CD8-positive, alpha-beta T cell (primary cell): ENCODE measurements at regions of chr12 and their contacts with region 1.

Region 1: DNA sequence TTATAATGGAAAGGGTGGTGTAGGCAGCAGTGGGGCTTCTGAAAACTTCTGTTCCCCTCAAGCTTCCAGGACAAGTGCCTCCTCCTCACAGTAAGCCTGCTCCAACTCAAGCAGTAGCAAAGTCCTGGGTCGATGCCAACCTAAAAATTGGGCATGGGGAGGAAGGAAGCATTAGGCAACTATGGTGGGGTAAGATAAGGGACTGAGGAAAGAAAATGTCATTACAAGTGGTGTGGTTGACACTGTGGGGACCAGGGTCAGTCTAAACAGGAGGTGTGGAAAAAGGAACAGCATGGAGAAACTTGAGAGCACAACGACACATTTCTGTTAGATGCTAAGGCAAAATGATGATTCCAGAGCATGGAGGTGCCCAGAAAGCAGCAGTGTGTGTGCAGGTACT is 34.9 kb downstream of the WIF1 start:
- DNase-seq: no peak
- ATAC-seq: no peak
- H3K4me3 ChIP-seq: no peak overlapping the region
- H3K4me3 Mint-ChIP-seq: no peak overlapping the region
- H3K27ac ChIP-seq: no peak overlapping the region
- H3K27ac Mint-ChIP-seq: no peak overlapping the region
- H3K4me1 ChIP-seq: no peaks in the 10 kb centered on the region
- H3K4me1 Mint-ChIP-seq: no peaks in the 10 kb centered on the region
- H3K27me3 ChIP-seq: peaks cover 0 to 3% of the 10 kb centered on the region in 2 experiments
- H3K27me3 Mint-ChIP-seq: peaks cover 16% of the 10 kb centered on the region
- CTCF ChIP-seq: no peak

Region 2: DNA sequence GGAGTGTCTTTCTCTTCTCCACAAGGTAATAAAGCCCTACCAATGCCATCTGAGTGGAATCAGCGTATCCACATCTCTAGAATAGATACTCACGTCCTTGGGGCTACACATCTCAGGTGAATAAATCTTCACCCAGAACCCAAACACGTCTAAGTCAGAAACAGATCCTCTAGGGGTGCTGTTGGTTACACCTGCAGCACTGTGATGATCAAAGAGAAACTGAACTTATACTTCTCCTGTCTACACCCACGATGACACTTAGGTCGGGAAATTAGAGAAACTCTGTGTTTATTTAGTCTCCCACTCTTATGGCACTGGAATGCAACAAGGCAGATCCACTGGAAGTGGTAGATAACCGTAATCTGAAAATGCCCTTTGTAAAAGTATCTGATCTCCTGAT is 11.3 kb before region 1 on chr12:
- CTCF ChIA-PET with region 1: no interaction called
- POLR2A ChIA-PET with region 1: no interaction called
- intact Hi-C with region 1: loop called in 1 of 2 experiments (anchors 2 kb)
- DNase-seq: no peak
- ATAC-seq: no peak
- H3K4me3 ChIP-seq: no peak overlapping the region
- H3K4me3 Mint-ChIP-seq: no peak overlapping the region
- H3K27ac ChIP-seq: no peak overlapping the region
- H3K27ac Mint-ChIP-seq: no peak overlapping the region
- H3K4me1 ChIP-seq: no peaks in the 10 kb centered on the region
- H3K4me1 Mint-ChIP-seq: no peaks in the 10 kb centered on the region
- H3K27me3 ChIP-seq: no peaks in the 10 kb centered on the region
- H3K27me3 Mint-ChIP-seq: peaks cover 25% of the 10 kb centered on the region
- CTCF ChIP-seq: no peak